ENCODE measurements at regions of chr15 and their contacts with region 1.

Region 1: GRCh38 chr15:101641166-101641764 is 10.9 kb downstream of the TM2D3 start:
- DNase-seq: peak; percentile 67
- ATAC-seq: peak; percentile 64 to 70

Region 2: GRCh38 chr15:101294731-101295606 is 346.3 kb before region 1 on chr15 and contains the start of gene SNRPA1:
- intact Hi-C with region 1: loop called in 1 of 2 experiments (anchors 5 kb)
- DNase-seq: peak; percentile 99
- ATAC-seq: peak; percentile 95 to 96
- total RNA-seq, gene SNRPA1: 26.7 to 36.7 TPM

Region 3: GRCh38 chr15:101445562-101446517 is 195.4 kb before region 1 on chr15:
- intact Hi-C with region 1: loop called in 1 of 2 experiments (anchors 10 kb)
- DNase-seq: peak; percentile 72
- ATAC-seq: peak; percentile 72 to 73

Region 4: DNA sequence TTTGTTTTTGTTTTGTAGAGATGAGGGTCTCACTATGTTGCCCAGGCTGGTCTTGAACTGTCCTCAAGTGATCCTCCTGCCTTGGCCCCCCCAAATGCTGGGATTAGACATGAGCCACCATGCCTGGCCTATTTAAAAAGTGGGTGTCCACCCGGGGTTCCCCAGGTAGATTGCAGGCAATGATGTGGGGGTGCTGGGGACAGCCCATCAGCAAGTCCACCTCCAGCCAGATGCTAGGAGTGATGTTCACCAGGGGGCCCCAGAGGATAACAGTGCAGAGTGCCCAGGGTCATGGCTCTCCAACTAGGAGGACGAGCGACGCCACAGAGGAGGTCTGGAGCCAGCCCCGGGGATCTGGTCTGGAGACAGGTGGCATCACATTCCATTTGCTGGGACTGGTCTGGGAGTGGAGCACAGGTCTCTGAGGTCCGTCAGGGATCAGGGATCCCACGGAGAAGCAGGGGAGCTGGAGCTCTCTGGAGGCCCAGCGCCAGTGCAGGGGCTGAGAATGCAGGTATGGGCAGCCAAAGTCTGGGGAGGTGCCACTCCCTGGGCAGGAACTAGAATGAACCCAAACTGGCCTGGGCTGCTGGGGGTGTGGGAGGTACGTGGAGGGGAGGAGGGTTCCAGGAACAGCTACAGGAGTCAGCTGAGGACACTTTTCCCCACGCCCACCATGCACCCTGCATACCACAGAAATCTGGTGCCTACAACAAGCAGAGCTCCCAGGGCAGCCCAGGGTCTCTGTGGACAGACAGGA is 100.6 kb before region 1 on chr15:
- intact Hi-C with region 1: loop called in 1 of 2 experiments (anchors 5 kb)
- DNase-seq: no peak
- ATAC-seq: no peak

Measured in left cardiac atrium (tissue), 4 donors.